B cell (primary cell): ENCODE measurements at regions of chr1 and their contacts with region 1.

Region 1: GRCh38 chr1:107529502-107530149 is 388.8 kb downstream of the NTNG1 start:
- DNase-seq: peak; percentile 71
- ATAC-seq: peak; percentile 89
- H3K4me3 ChIP-seq: no peak overlapping the region
- H3K4me3 Mint-ChIP-seq: no peak overlapping the region
- H3K27ac ChIP-seq: no peak overlapping the region
- H3K27ac Mint-ChIP-seq: no peak overlapping the region
- H3K4me1 ChIP-seq: peaks cover 0 to 3% of the 10 kb centered on the region in 2 donors
- H3K4me1 Mint-ChIP-seq: peaks cover 10% of the 10 kb centered on the region
- H3K27me3 ChIP-seq: no peaks in the 10 kb centered on the region
- H3K27me3 Mint-ChIP-seq: no peaks in the 10 kb centered on the region
- CTCF ChIP-seq: peak; percentile 92

Region 2: GRCh38 chr1:106022312-106022902 is 1507.2 kb before region 1 on chr1:
- CTCF ChIA-PET with region 1: no interaction called
- POLR2A ChIA-PET with region 1: no interaction called
- intact Hi-C with region 1: loop called (anchors 5 kb)
- DNase-seq: no peak
- ATAC-seq: no peak
- H3K4me3 ChIP-seq: no peak overlapping the region
- H3K4me3 Mint-ChIP-seq: no peak overlapping the region
- H3K27ac ChIP-seq: no peak overlapping the region
- H3K27ac Mint-ChIP-seq: no peak overlapping the region
- H3K4me1 ChIP-seq: no peaks in the 10 kb centered on the region
- H3K4me1 Mint-ChIP-seq: peaks cover 2% of the 10 kb centered on the region
- H3K27me3 ChIP-seq: no peaks in the 10 kb centered on the region
- H3K27me3 Mint-ChIP-seq: no peaks in the 10 kb centered on the region
- CTCF ChIP-seq: peak; percentile 69

Region 3: GRCh38 chr1:107196973-107197562 is 332.6 kb before region 1 on chr1:
- CTCF ChIA-PET with region 1: interaction called, 35 read pairs
- POLR2A ChIA-PET with region 1: no interaction called
- intact Hi-C with region 1: loop called (anchors 1 kb)
- DNase-seq: peak; percentile 68
- ATAC-seq: peak; percentile 60
- H3K4me3 ChIP-seq: no peak overlapping the region
- H3K4me3 Mint-ChIP-seq: no peak overlapping the region
- H3K27ac ChIP-seq: no peak overlapping the region
- H3K27ac Mint-ChIP-seq: no peak overlapping the region
- H3K4me1 ChIP-seq: peaks cover 0 to 3% of the 10 kb centered on the region in 2 donors
- H3K4me1 Mint-ChIP-seq: peaks cover 3% of the 10 kb centered on the region
- H3K27me3 ChIP-seq: no peaks in the 10 kb centered on the region
- H3K27me3 Mint-ChIP-seq: no peaks in the 10 kb centered on the region
- CTCF ChIP-seq: peak; percentile 71

Region 4: DNA sequence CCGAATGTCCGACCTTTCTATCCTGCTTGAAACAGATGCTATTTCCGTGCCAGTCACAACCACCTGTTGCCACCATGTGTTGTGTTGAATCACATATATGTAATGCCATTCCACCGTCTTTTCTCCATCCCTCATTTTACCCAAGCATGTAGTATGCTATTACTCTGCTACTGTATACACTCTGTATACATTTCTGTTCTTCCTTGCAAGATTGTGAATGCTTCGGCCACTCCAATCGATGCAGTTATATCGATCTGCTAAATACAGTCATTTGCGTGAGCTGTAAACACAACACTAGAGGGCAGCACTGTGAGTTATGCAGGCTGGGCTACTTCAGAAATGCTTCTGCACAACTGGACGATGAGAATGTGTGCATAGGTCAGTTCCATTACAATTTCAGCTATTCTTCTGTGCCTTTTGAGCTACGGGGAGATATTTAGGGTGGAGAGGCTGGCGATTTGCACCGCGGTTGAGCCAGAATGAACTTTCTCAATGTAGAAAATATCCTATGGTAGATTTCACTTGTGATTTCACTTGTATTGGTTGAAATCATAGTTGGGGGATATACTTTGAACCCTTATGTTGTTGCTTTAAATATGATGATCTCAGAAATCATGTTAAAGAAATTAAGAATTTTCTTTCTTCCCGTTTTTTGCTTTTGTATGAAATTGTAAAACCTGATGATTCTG is 98.9 kb before region 1 on chr1:
- CTCF ChIA-PET with region 1: interaction called, 191 read pairs
- POLR2A ChIA-PET with region 1: no interaction called
- intact Hi-C with region 1: loop called (anchors 1 kb)
- DNase-seq: peak; percentile 71
- ATAC-seq: peak; percentile 56
- H3K4me3 ChIP-seq: no peak overlapping the region
- H3K4me3 Mint-ChIP-seq: peak overlapping the region; percentile 17
- H3K27ac ChIP-seq: no peak overlapping the region
- H3K27ac Mint-ChIP-seq: no peak overlapping the region
- H3K4me1 ChIP-seq: peaks cover 24 to 26% of the 10 kb centered on the region in 2 donors
- H3K4me1 Mint-ChIP-seq: peaks cover 22% of the 10 kb centered on the region
- H3K27me3 ChIP-seq: no peaks in the 10 kb centered on the region
- H3K27me3 Mint-ChIP-seq: no peaks in the 10 kb centered on the region
- CTCF ChIP-seq: peak; percentile 86

Region 5: GRCh38 chr1:107480548-107481415 is 48.8 kb before region 1 on chr1:
- CTCF ChIA-PET with region 1: interaction called, 14 read pairs
- POLR2A ChIA-PET with region 1: no interaction called
- intact Hi-C with region 1: no loop called
- DNase-seq: peak; percentile 66
- ATAC-seq: peak; percentile 90
- H3K4me3 ChIP-seq: peak overlapping the region in 4 of 5 experiments; percentile 7 to 53 (median 42)
- H3K4me3 Mint-ChIP-seq: peak overlapping the region; percentile 89
- H3K27ac ChIP-seq: no peak overlapping the region
- H3K27ac Mint-ChIP-seq: no peak overlapping the region
- H3K4me1 ChIP-seq: peaks cover 8 to 12% of the 10 kb centered on the region in 2 donors
- H3K4me1 Mint-ChIP-seq: peaks cover 12% of the 10 kb centered on the region
- H3K27me3 ChIP-seq: peaks cover 0 to 3% (median 0%) of the 10 kb centered on the region in 4 experiments
- H3K27me3 Mint-ChIP-seq: no peaks in the 10 kb centered on the region
- CTCF ChIP-seq: peak; percentile 28

Region 6: DNA sequence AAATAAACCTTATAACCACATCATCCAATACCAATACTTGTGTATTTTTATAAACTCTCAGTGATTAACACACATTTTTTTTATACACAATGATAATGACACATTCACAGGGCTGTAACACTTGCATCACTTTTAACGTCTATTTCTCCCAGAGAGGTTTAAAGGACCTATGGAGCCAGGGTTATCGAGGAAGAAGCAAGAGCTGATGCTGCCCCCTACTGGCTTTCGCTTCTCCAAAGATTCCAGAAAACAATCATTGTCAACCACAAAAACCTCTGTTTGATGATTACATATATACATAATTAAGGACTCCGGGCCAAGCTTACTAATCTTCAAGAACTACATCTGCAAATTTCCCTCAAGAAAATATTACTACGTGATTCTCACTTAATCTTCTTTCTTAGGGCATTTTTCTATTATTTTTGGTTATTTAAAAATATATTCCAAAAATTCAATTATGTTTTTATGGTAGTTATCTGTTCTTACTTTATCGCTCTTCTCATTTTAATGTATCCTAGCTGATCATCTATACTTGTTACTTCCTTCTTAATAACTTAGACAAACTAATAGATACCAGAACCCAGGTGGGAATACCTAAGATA is 220.8 kb after region 1 on chr1:
- CTCF ChIA-PET with region 1: interaction called, 13 read pairs
- POLR2A ChIA-PET with region 1: no interaction called
- intact Hi-C with region 1: no loop called
- DNase-seq: peak; percentile 53
- ATAC-seq: no peak
- H3K4me3 ChIP-seq: no peak overlapping the region
- H3K4me3 Mint-ChIP-seq: no peak overlapping the region
- H3K27ac ChIP-seq: no peak overlapping the region
- H3K27ac Mint-ChIP-seq: no peak overlapping the region
- H3K4me1 ChIP-seq: no peaks in the 10 kb centered on the region
- H3K4me1 Mint-ChIP-seq: no peaks in the 10 kb centered on the region
- H3K27me3 ChIP-seq: no peaks in the 10 kb centered on the region
- H3K27me3 Mint-ChIP-seq: no peaks in the 10 kb centered on the region
- CTCF ChIP-seq: peak; percentile 74